ENCODE measurements at regions of chr4 and their contacts with region 1.

Region 1: DNA sequence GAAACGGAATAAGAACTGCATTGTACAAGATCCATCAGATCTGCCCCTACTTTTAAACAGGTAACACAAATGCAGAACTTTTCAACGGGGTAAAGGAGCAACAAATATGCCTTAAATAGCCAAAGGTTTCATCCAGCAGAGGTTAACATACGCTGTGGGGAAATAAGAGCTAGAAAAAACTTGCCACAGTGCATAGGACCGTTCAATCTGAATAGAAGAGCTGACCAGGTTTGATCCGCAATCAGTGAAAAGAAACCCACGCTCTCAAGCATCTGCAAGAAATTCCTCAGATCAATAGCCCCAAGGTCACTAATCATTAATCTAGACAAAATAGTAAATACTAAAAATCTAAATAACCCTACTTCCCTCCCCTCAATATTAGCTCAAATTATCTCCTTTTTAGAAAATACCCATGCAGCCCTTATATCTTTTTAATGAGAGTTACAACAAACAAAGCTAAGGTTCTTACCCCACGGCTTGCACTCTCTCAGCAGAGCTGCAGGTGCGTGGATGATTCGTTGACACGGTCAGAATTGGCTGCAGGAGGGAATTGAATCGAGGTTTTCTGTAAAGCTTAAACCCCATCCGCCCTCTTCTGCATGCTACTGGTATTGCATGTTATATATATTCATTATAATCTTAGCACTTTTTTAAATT is at the start of gene TLR10:
- DNase-seq: peak; percentile 82
- ATAC-seq: peak; percentile 74
- H3K4me3 ChIP-seq: peak within 1 kb of the TSS; percentile 81
- H3K27ac ChIP-seq: peak within 1 kb of the TSS; percentile 96
- H3K4me1 ChIP-seq: peaks cover 22% of the 10 kb centered on the region
- H3K27me3 ChIP-seq: no peaks in the 10 kb centered on the region
- CTCF ChIP-seq: peak; percentile 60 to 68 (median 63)
- EP300 ChIP-seq: no peak
- POLR2A ChIP-seq: peak; percentile 72
- RAD21 ChIP-seq: peak; percentile 83
- polyA plus RNA-seq, gene TLR10: 31.5 to 41.8 TPM

Region 2: DNA sequence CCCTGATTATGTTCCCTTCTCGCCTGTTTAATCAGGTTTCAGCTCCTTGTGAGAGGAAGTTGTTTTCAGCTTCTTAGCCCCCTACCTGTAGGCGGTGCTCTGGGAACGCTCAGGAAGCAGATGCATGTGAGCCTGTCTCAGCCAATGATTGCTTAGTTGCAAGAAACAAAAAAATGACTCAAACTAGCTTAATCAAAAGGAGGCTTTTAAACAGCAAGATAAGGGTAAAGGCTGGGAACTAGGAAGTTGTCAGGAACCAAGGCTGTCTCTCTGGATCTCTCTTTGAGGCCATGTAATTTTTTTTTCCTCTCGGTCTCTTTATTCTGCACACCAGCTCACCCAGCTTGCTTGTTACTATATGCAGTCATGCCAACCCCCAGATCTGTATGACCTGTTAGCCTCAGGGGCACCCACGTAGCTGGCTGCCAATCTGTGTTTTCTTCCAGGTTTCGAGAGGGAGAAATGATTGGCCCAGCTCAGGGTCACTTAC is 713.3 kb before region 1 on chr4:
- CTCF ChIA-PET with region 1: interaction called, 10 read pairs
- POLR2A ChIA-PET with region 1: no interaction called
- RAD21 ChIA-PET with region 1: interaction called, 4 read pairs
- SMC1A ChIA-PET with region 1: interaction called, 6 read pairs
- in situ Hi-C with region 1: no loop called
- intact Hi-C with region 1: no loop called
- DNase-seq: no peak
- ATAC-seq: peak; percentile 63
- H3K4me3 ChIP-seq: no peak overlapping the region
- H3K27ac ChIP-seq: peak overlapping the region; percentile 22
- H3K4me1 ChIP-seq: peaks cover 19% of the 10 kb centered on the region
- H3K27me3 ChIP-seq: no peaks in the 10 kb centered on the region
- CTCF ChIP-seq: peak; percentile 48 to 79 (median 67); a peak in 5 of 6 replicates
- EP300 ChIP-seq: no peak
- POLR2A ChIP-seq: no peak
- RAD21 ChIP-seq: peak; percentile 92

Region 3: GRCh38 chr4:38768968-38769394 is 13.6 kb before region 1 on chr4:
- CTCF ChIA-PET with region 1: interaction called, 449 read pairs
- POLR2A ChIA-PET with region 1: interaction called, 196 read pairs
- RAD21 ChIA-PET with region 1: interaction called, 437 read pairs
- SMC1A ChIA-PET with region 1: interaction called, 468 read pairs
- in situ Hi-C with region 1: no loop called
- intact Hi-C with region 1: no loop called
- DNase-seq: no peak
- ATAC-seq: peak; percentile 67
- H3K4me3 ChIP-seq: no peak overlapping the region
- H3K27ac ChIP-seq: peak overlapping the region; percentile 56
- H3K4me1 ChIP-seq: peaks cover 16% of the 10 kb centered on the region
- H3K27me3 ChIP-seq: no peaks in the 10 kb centered on the region
- CTCF ChIP-seq: no peak
- EP300 ChIP-seq: no peak
- POLR2A ChIP-seq: no peak
- RAD21 ChIP-seq: no peak

Region 4: DNA sequence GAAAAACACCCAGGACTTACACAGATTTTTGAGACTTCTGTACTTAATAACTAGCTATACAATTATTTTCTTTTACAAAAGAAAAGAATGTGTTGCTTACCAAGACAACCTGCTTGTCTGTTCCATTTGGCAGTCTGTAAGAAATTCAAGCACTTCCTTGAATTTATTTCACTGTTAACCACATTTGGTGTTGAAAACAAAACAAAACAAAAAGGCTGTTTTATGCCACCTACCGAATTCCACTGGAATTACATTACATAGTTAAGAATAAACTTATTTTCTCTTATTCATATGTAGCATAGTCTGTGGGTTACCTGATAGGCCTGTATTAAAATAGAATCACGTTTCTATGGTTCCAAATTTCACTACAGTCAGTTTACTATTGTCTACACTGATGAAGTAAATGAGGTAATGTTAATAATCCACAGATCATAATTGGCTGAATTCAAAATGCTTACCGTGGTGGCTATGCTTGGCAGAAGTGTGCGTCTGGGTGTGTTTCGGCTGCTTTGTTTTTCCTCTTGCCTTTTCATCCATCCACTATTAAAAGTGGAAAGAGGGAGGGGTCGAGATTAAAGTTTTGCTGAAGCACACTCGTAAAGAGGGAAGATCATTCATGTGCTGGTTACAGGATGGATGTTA is 22.2 kb after region 1 on chr4 and contains the start of gene TLR1:
- CTCF ChIA-PET with region 1: interaction called, 175 read pairs
- POLR2A ChIA-PET with region 1: interaction called, 107 read pairs
- RAD21 ChIA-PET with region 1: interaction called, 199 read pairs
- SMC1A ChIA-PET with region 1: interaction called, 278 read pairs
- in situ Hi-C with region 1: no loop called
- intact Hi-C with region 1: loop called (anchors 1 kb)
- DNase-seq: peak; percentile 62
- ATAC-seq: peak; percentile 67
- H3K4me3 ChIP-seq: peak within 1 kb of the TSS; percentile 41
- H3K27ac ChIP-seq: peak within 1 kb of the TSS; percentile 86
- H3K4me1 ChIP-seq: peaks cover 20% of the 10 kb centered on the region
- H3K27me3 ChIP-seq: no peaks in the 10 kb centered on the region
- CTCF ChIP-seq: peak; percentile 22 to 47 (median 38); a peak in 5 of 6 replicates
- EP300 ChIP-seq: no peak
- POLR2A ChIP-seq: no peak
- RAD21 ChIP-seq: peak; percentile 64
- polyA plus RNA-seq, gene TLR1: 9.3 to 9.5 TPM

Region 5: DNA sequence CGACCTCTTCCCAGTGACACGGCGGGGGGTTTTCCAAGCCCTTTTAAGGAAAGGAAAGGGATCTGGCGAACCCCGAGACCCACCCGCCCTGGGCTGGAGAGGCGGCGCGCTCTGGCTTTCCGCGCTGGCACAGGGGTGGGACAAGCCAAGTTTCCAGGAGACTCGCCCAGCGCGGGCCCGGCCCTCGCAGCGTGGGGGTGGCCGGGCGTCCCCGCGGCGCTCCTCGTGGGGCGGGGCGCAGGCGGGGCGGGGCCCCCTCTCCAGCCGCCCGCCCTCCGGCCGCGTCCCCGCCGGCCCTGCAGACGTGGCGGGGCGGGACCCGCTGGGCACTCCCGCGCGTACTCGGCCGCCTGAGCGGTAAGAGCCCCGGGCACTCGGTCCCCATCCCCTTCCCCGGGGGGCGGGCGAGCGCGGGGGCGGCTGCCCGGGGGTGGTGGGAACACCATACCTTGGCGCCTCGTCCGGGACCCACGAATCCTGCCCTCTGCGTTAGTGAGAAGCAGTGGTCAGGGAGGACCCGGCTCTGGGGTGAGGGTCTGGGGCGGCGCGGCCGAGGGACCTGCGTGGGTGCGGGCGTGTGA is 85.0 kb after region 1 on chr4 and contains the start of gene FAM114A1:
- CTCF ChIA-PET with region 1: interaction called, 9 read pairs
- POLR2A ChIA-PET with region 1: interaction called, 8 read pairs
- RAD21 ChIA-PET with region 1: interaction called, 10 read pairs
- SMC1A ChIA-PET with region 1: interaction called, 8 read pairs
- in situ Hi-C with region 1: no loop called
- intact Hi-C with region 1: no loop called
- DNase-seq: no peak
- ATAC-seq: peak; percentile 99
- H3K4me3 ChIP-seq: peak within 1 kb of the TSS; percentile 82
- H3K27ac ChIP-seq: no peak within 1 kb of the TSS; the same call in 1 of the 2 replicates
- H3K4me1 ChIP-seq: peaks cover 7% of the 10 kb centered on the region
- H3K27me3 ChIP-seq: no peaks in the 10 kb centered on the region
- CTCF ChIP-seq: no peak
- EP300 ChIP-seq: no peak
- POLR2A ChIP-seq: peak; percentile 80
- RAD21 ChIP-seq: no peak
- polyA plus RNA-seq, gene FAM114A1: 1.3 to 1.9 TPM

Region 6: GRCh38 chr4:38894340-38894982 is 111.9 kb after region 1 on chr4:
- CTCF ChIA-PET with region 1: interaction called, 15 read pairs
- POLR2A ChIA-PET with region 1: interaction called, 8 read pairs
- RAD21 ChIA-PET with region 1: interaction called, 35 read pairs
- SMC1A ChIA-PET with region 1: interaction called, 28 read pairs
- in situ Hi-C with region 1: no loop called
- intact Hi-C with region 1: no loop called
- DNase-seq: no peak
- ATAC-seq: peak; percentile 42
- H3K4me3 ChIP-seq: no peak overlapping the region
- H3K27ac ChIP-seq: no peak overlapping the region
- H3K4me1 ChIP-seq: no peaks in the 10 kb centered on the region
- H3K27me3 ChIP-seq: no peaks in the 10 kb centered on the region
- CTCF ChIP-seq: peak in 2 of 3 experiments; percentile 4 to 27; a peak in 2 of 6 replicates
- EP300 ChIP-seq: no peak
- POLR2A ChIP-seq: no peak
- RAD21 ChIP-seq: no peak

Region 7: GRCh38 chr4:38979511-38980230 is 197.1 kb after region 1 on chr4:
- CTCF ChIA-PET with region 1: no interaction called
- POLR2A ChIA-PET with region 1: no interaction called
- RAD21 ChIA-PET with region 1: no interaction called
- SMC1A ChIA-PET with region 1: no interaction called
- in situ Hi-C with region 1: no loop called
- intact Hi-C with region 1: no loop called
- DNase-seq: no peak
- ATAC-seq: no peak
- H3K4me3 ChIP-seq: no peak overlapping the region
- H3K27ac ChIP-seq: no peak overlapping the region
- H3K4me1 ChIP-seq: peaks cover 6% of the 10 kb centered on the region; the same call in 1 of the 2 replicates
- H3K27me3 ChIP-seq: no peaks in the 10 kb centered on the region
- CTCF ChIP-seq: no peak
- EP300 ChIP-seq: no peak
- POLR2A ChIP-seq: no peak
- RAD21 ChIP-seq: no peak